CD8-positive, alpha-beta memory T cell (primary cell): ENCODE measurements at regions of chr14 and their contacts with region 1.

Region 1: GRCh38 chr14:69191340-69192111 is at the start of gene EXD2:
- DNase-seq: peak; percentile 21 to 77 (median 63)
- H3K4me3 ChIP-seq: peak within 1 kb of the TSS; percentile 67
- H3K4me3 Mint-ChIP-seq: peak within 1 kb of the TSS; percentile 90 to 97 (median 95)
- H3K27ac ChIP-seq: peak within 1 kb of the TSS; percentile 69
- H3K27ac Mint-ChIP-seq: peak within 1 kb of the TSS; percentile 71 to 96 (median 90)
- H3K4me1 ChIP-seq: no peaks in the 10 kb centered on the region
- H3K4me1 Mint-ChIP-seq: peaks cover 18 to 29% (median 23%) of the 10 kb centered on the region in 3 donors
- H3K27me3 ChIP-seq: no peaks in the 10 kb centered on the region
- H3K27me3 Mint-ChIP-seq: peaks cover 1 to 5% of the 10 kb centered on the region in 2 donors
- total RNA-seq, gene EXD2: 11.6 to 12.5 TPM

Region 2: DNA sequence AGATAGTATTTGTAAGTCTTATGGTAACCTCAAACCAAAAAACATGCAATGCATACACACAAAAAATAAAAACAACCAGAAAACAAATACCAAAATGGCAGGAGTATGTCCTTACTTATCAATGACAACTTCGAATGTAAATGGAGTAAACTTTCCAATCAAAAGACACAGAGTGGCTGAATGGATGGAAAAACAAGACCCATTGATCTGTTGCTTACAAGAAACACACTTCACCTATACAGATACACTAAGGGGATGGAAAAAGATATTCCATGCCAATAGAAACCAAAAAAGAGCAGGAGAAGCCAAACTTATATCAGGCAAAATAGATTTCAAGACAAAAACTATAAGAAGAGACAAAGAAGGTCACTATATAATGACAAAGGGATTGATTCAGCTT is 29.9 kb before region 1 on chr14:
- CTCF ChIA-PET with region 1: no interaction called
- POLR2A ChIA-PET with region 1: interaction called, 11 read pairs
- DNase-seq: no peak
- H3K4me3 ChIP-seq: no peak overlapping the region
- H3K4me3 Mint-ChIP-seq: no peak overlapping the region
- H3K27ac ChIP-seq: no peak overlapping the region
- H3K27ac Mint-ChIP-seq: no peak overlapping the region
- H3K4me1 ChIP-seq: no peaks in the 10 kb centered on the region
- H3K4me1 Mint-ChIP-seq: no peaks in the 10 kb centered on the region
- H3K27me3 ChIP-seq: no peaks in the 10 kb centered on the region
- H3K27me3 Mint-ChIP-seq: peaks cover 30 to 47% of the 10 kb centered on the region in 2 donors